Naive thymus-derived CD4-positive, alpha-beta T cell (primary cell): ENCODE measurements at regions of chrX and their contacts with region 1.

Region 1: DNA sequence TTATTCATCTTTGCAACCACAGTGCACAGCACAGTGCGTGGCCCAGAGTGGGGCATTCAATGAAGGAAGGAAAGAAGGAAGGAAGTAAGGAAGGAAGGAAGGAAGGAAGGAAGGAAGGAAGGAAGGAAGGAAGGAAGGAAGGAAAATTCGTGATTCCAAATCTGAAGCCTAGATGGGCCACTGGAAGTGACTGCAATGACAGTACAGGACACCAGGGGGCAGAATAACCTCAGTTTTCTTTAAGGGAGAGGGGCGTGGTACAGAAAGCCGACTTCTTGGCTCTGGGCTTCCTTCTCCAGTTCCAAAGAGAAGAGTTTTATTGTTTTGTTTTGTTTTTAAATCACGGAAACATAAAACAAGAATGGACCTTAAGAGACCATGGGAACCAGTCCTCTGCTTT is 47.8 kb downstream of the APLN start:
- DNase-seq: peak in 8 of 9 donors; percentile 29 to 63 (median 54)
- ATAC-seq: peak; percentile 75
- H3K4me3 ChIP-seq: no peak overlapping the region
- H3K4me3 Mint-ChIP-seq: no peak overlapping the region
- H3K27ac ChIP-seq: no peak overlapping the region
- H3K27ac Mint-ChIP-seq: peak overlapping the region in 1 of 9 donors; percentile 84
- H3K4me1 ChIP-seq: peaks cover 5 to 7% of the 10 kb centered on the region in 2 donors
- H3K4me1 Mint-ChIP-seq: peaks cover 4 to 35% (median 16%) of the 10 kb centered on the region in 7 donors
- H3K27me3 ChIP-seq: no peaks in the 10 kb centered on the region
- H3K27me3 Mint-ChIP-seq: no peaks in the 10 kb centered on the region

Region 2: DNA sequence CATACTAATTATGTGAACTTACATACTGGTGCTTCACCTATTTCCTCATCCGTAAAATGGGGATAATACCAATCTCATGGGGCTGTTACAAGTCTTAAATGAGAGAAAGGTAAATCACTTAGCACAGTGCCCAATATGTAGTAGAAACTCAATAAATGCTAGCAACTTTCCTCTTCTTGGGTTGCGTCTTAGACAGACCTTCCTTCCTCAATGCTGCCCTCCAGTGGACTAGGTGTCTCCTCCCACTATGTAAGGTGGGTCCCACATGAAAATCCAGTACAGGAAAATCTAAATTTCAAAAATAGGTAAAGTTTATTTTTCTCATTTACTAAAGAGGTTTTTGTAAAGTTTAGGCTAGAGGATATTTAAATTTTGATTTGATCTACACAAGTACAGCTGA is 216.2 kb after region 1 on chrX:
- CTCF ChIA-PET with region 1: interaction called, 3 read pairs
- POLR2A ChIA-PET with region 1: no interaction called
- intact Hi-C with region 1: loop called (anchors 1 kb)
- DNase-seq: peak in 8 of 9 donors; percentile 23 to 68 (median 52)
- ATAC-seq: peak; percentile 81
- H3K4me3 ChIP-seq: no peak overlapping the region
- H3K4me3 Mint-ChIP-seq: no peak overlapping the region
- H3K27ac ChIP-seq: no peak overlapping the region
- H3K27ac Mint-ChIP-seq: peak overlapping the region in 1 of 9 donors; percentile 83
- H3K4me1 ChIP-seq: peaks cover 0 to 6% of the 10 kb centered on the region in 2 donors
- H3K4me1 Mint-ChIP-seq: peaks cover 0 to 21% (median 14%) of the 10 kb centered on the region in 7 donors
- H3K27me3 ChIP-seq: no peaks in the 10 kb centered on the region
- H3K27me3 Mint-ChIP-seq: no peaks in the 10 kb centered on the region

Region 3: DNA sequence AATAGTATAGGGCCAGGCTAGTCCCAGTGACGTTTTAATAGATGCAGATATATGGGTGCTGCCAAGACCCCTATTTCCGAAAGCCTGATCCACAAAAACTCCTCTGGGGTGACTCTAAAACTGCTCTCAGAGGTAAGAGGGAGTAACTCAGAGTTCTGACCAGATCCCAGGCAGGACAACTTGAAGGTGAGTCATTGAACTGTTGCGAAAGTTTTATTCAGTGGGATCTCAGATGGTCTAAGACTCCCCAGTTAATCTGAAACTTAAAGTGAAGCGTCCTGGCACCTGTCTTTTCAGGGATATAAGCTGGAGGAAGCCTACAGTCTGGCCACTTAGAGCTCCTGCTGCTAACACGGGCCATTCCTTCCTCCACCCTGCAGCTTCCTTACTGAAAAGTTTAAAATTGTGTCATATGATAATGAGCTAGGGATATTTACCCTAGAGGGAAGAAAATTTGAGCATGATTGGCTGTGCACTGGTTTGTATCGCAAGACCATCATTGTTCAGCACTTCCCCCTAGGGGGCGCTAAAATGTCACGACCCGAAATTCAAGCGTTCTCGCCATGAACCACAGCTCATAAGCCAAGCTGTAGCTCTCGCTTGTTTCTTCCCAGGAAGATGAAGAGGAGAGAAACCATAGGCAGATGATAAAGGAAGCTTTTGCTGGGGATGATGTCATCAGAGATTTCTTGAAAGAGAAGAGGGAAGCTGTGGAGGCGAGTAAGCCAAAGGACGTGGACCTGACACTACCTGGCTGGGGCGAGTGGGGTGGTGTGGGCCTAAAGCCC is 318.6 kb after region 1 on chrX:
- CTCF ChIA-PET with region 1: interaction called, 3 read pairs
- POLR2A ChIA-PET with region 1: no interaction called
- intact Hi-C with region 1: loop called (anchors 2 to 5 kb)
- DNase-seq: peak; percentile 18 to 74 (median 67)
- ATAC-seq: peak; percentile 89
- H3K4me3 ChIP-seq: no peak overlapping the region
- H3K4me3 Mint-ChIP-seq: no peak overlapping the region
- H3K27ac ChIP-seq: no peak overlapping the region
- H3K27ac Mint-ChIP-seq: peak overlapping the region in 1 of 9 donors; percentile 41
- H3K4me1 ChIP-seq: no peaks in the 10 kb centered on the region
- H3K4me1 Mint-ChIP-seq: peaks cover 0 to 5% (median 0%) of the 10 kb centered on the region in 7 donors
- H3K27me3 ChIP-seq: no peaks in the 10 kb centered on the region
- H3K27me3 Mint-ChIP-seq: no peaks in the 10 kb centered on the region

Region 4: GRCh38 chrX:130060122-130061069 is 453.5 kb after region 1 on chrX:
- CTCF ChIA-PET with region 1: interaction called, 7 read pairs
- POLR2A ChIA-PET with region 1: no interaction called
- intact Hi-C with region 1: loop called (anchors 1 kb)
- DNase-seq: peak; percentile 51 to 92 (median 68)
- ATAC-seq: peak; percentile 95
- H3K4me3 ChIP-seq: peak overlapping the region; percentile 51
- H3K4me3 Mint-ChIP-seq: peak overlapping the region; percentile 54 to 79 (median 71)
- H3K27ac ChIP-seq: peak overlapping the region; percentile 60
- H3K27ac Mint-ChIP-seq: peak overlapping the region in 2 of 9 donors; percentile 26 to 76
- H3K4me1 ChIP-seq: no peaks in the 10 kb centered on the region
- H3K4me1 Mint-ChIP-seq: peaks cover 0 to 14% (median 6%) of the 10 kb centered on the region in 7 donors
- H3K27me3 ChIP-seq: no peaks in the 10 kb centered on the region
- H3K27me3 Mint-ChIP-seq: no peaks in the 10 kb centered on the region

Region 5: DNA sequence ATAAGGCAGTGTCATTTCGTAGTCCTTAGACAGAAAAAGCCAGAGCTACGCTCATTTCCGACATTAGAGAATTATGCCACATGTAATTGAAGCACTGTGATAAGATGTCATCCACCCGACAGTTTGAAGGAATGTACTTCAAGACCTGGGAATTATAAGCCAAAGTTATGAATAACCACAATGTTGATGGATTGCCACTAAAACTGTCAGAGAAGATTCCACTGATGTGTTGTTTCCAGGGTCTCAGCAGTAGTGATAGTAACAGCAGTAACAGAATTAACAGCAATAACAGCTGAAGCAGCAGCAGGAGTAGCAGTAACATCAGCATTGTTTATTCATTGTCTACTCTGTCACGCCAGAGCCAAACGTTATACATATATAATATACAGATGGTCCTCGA is 589.5 kb after region 1 on chrX:
- CTCF ChIA-PET with region 1: no interaction called
- POLR2A ChIA-PET with region 1: no interaction called
- intact Hi-C with region 1: loop called (anchors 1 to 5 kb)
- DNase-seq: no peak
- ATAC-seq: no peak
- H3K4me3 ChIP-seq: no peak overlapping the region
- H3K4me3 Mint-ChIP-seq: no peak overlapping the region
- H3K27ac ChIP-seq: no peak overlapping the region
- H3K27ac Mint-ChIP-seq: peak overlapping the region in 1 of 9 donors; percentile 38
- H3K4me1 ChIP-seq: no peaks in the 10 kb centered on the region
- H3K4me1 Mint-ChIP-seq: peaks cover 0 to 4% (median 0%) of the 10 kb centered on the region in 7 donors
- H3K27me3 ChIP-seq: no peaks in the 10 kb centered on the region
- H3K27me3 Mint-ChIP-seq: no peaks in the 10 kb centered on the region